ENCODE measurements at regions of chr9 and their contacts with region 1.

Region 1: GRCh38 chr9:73116031-73116430 is 35.6 kb upstream of the ANXA1 start:
- DNase-seq: no peak
- H3K4me3 ChIP-seq: no peak overlapping the region
- CTCF ChIP-seq: no peak

Region 2: DNA sequence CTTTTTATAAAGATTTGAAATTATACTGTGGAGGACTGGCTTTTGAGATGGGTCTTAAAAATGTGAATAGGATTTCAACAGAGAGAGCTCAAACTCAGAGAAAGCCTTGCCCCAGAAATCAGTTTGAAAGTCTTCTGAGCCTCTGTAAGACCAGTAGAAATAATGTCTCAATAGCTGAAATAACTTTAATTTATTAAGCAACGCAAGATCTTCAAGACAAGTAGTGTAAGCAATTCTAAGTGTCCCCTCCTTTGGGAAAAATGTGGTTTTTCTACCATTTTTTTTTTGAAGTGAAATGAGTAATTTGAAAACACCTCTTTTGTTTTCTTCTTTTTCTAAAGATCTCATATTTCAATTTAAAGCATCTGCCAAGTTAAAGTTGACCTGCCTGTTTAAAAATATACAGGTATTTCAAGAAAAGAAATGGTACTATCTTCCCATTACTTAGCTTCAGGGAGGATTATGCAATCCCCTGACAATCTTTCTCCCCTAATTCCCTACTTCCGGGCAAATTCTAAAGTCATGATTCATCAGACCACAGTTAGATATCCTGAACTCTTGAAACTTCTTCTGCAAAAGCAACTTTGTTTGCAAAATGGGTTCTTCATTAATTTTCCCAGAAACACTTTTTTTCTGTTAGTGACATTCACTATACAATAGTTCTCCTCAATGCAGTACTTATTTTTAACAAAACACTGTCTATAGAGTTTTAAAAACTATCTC is 27.7 kb after region 1 on chr9:
- CTCF ChIA-PET with region 1: no interaction called
- POLR2A ChIA-PET with region 1: no interaction called
- DNase-seq: peak; percentile 59
- H3K4me3 ChIP-seq: no peak overlapping the region
- CTCF ChIP-seq: no peak

Region 3: DNA sequence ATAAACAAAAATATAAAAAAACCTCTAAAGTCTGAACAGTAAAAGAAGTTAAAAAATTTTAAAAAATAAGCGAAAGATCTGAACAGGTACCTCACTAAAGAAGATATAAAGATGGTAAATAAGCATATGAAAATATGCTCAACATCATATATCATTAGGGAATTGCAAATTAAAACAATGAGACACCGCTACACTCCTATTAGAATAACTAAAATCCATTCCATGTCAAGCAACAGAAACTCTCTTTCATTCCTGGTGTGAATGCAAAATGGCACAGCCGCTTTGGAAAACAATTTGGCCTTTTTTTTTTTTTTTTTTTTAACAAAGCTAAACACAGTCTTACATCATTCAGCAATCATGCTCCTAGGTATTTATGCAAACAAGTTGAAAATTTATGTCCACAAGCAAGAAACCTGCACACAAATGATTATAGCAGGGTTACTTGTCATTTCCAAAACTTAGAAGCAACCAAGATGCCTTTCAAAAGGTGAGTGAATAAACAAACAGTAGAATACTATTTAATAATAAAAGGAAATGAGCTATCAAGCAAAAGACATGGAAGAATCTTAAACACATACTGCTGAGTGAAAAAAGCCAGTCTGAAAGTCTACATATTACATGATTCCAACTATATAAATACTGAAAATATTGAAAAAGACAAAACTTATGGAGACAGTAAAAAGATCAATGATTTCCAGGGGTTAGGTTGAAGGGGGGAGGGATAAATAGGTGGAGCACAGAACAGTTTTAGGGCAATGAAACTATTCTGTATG is 57.7 kb after region 1 on chr9:
- CTCF ChIA-PET with region 1: interaction called, 193 read pairs
- POLR2A ChIA-PET with region 1: interaction called, 3 read pairs
- DNase-seq: no peak
- H3K4me3 ChIP-seq: no peak overlapping the region
- CTCF ChIP-seq: no peak